Activated CD4-positive, alpha-beta T cell treated with anti-CD3 and anti-CD28 coated beads for 36 hours (primary cell): ENCODE measurements at regions of chr18 and their contacts with region 1.

Region 1: DNA sequence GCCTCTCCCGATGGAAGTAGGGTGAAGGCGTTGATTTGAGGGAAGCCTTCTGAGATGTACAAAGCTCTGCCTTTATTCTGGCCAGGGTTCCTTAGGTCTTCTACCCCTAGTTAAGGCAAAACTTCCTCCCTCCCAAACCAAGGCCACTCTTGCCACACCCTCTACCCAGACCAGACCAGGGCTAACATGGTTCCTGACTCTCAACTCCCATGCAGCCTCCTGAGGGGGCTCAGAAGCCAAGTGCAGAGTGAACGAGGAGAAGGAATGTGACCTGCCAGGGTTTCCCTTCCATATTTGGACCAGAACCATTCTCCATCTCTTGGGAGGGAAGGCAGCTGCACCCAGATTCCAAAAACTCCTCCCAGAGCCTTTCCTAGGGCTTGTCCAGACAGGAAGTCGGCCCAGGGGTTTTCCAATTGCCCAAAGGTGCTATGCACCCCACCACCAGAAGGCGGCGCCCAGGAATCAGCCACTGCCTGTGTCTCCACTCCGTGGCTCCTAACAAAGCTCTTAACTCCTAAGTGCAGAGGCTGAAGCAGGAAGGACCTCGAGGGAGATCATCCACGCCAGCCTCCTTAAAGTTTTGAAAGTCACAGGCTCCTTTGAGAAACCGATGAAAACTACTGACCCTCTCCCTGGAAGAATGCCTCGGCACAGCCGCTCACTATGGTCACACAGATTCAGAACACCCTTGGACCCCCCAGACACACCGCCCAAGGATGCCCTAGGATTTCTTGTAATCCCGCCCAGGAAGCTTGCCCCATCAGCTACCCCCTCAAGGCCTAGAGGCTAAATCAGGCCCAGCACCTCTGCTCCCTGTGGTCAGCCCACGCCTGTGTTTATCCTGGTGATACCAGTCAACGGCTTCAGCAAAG is 157.8 kb downstream of the SMAD2 start:
- DNase-seq: peak; percentile 84
- ATAC-seq: peak; percentile 76
- H3K4me3 Mint-ChIP-seq: no peak overlapping the region
- H3K27ac Mint-ChIP-seq: no peak overlapping the region
- H3K4me1 Mint-ChIP-seq: no peaks in the 10 kb centered on the region
- H3K27me3 Mint-ChIP-seq: peaks cover 2% of the 10 kb centered on the region

Region 2: DNA sequence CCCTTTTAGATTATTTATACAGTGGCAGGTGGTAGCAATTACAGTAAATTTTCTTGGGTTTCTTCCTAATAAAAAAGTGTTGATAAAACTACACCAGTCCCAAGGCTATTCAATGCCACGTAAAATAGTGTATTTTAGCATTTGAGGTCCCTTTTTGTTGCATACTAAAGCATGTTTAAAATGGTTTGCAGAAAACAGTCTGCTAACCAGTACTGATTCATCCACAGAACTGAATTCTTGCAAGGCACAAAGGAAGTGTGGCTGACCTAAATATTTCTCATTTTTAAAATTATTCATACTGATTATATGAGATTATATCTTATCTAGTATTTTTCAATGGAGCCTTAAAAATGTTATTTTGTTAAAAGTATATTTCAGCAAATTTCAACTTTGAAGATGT is 59.7 kb after region 1 on chr18:
- CTCF ChIA-PET with region 1: no interaction called
- POLR2A ChIA-PET with region 1: no interaction called
- intact Hi-C with region 1: loop called in 1 of 2 experiments (anchors 10 kb)
- DNase-seq: no peak
- ATAC-seq: no peak
- H3K4me3 Mint-ChIP-seq: no peak overlapping the region
- H3K27ac Mint-ChIP-seq: no peak overlapping the region
- H3K4me1 Mint-ChIP-seq: peaks cover 2% of the 10 kb centered on the region
- H3K27me3 Mint-ChIP-seq: no peaks in the 10 kb centered on the region

Region 3: DNA sequence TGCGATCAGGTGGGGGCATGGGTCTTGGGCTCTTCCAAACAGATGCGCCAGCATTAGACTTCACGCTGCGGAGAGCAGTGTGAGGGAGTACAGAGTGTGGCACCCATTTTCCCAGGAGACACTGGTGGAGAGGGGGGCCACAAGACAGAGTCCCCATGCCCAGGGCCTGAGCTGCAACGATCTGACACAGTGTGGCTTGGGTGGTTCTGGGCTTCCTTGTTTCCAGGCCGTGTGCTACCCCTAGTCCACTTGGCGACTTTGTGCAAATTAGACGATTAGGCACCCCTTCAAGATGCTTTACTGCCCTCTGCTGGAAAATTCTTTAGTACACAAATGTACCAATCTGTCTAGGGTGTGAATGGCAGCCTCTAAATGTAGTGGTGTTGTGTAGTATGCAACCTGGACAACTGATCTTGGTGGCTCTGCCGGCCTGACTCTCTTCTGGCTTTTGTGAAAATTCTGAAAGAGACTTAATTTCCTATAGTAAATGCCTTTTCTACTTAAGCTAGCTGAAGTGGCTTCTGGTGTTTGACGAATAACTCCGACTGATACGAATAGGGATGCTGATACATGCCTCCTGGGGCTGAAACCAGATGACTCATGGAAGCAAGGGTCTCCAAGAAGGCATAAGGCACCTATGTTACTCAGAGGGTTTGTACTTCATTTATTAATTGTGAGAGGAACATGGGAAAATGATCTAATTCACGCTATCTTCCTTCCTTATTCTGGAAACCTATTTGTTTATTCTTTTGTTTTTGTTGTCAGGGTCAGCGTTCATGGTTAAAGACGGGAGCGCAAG is 250.1 kb after region 1 on chr18:
- CTCF ChIA-PET with region 1: interaction called, 5 read pairs
- POLR2A ChIA-PET with region 1: no interaction called
- intact Hi-C with region 1: loop called (anchors 1 kb)
- DNase-seq: peak; percentile 16
- ATAC-seq: peak; percentile 76
- H3K4me3 Mint-ChIP-seq: no peak overlapping the region
- H3K27ac Mint-ChIP-seq: no peak overlapping the region
- H3K4me1 Mint-ChIP-seq: peaks cover 3% of the 10 kb centered on the region
- H3K27me3 Mint-ChIP-seq: peaks cover 11% of the 10 kb centered on the region

Region 4: DNA sequence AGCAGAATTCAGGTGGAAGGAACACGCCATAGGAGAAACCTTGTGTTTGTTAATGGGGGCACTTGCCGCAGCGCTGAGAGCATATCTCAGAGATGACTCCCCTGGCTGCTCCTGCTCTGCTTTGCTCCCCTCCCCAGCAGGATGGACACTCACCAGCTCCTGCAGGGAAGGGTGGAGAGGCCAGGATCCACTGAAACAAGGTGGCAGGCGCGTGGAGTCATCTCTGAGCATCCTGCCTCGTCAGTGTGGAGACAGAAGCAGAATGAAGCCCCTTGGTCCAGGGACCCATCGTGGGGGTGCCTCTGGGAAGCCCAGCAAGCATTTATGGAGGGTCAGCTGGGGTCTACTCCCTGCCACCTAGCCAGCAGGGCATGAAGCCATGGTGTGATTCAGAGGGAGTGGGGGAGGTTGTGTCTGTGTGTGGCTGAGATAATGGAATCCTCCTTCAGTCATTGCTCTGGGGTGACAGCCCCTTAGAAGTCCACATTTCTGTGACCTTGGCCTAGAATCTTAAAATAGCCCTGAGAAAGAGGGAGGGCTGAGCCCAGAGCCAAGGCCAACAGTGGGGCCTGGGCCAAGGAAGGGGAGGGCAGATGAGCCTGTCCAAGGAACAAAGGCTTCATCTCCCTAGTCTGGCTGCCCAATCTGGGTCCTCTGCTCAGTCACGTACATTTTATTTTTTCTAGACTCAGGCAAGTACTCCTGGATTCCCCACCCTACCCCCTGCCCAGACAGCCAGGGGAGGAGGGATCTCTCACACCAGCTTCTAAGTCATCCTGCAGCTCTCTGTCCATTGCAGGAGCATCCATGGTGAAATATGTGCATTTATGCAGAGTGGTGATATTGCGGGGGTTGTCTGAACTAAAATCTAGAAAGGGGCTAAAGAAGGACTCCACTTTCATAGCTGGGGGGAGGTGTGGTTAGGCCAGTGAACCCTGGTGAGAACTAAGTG is 421.2 kb after region 1 on chr18:
- CTCF ChIA-PET with region 1: no interaction called
- POLR2A ChIA-PET with region 1: no interaction called
- intact Hi-C with region 1: no loop called
- DNase-seq: no peak
- ATAC-seq: no peak
- H3K4me3 Mint-ChIP-seq: no peak overlapping the region
- H3K27ac Mint-ChIP-seq: no peak overlapping the region
- H3K4me1 Mint-ChIP-seq: peaks cover 4% of the 10 kb centered on the region
- H3K27me3 Mint-ChIP-seq: peaks cover 11% of the 10 kb centered on the region